ENCODE measurements at regions of chr4 and their contacts with region 1.

Region 1: GRCh38 chr4:139734875-139735380 is 69.3 kb downstream of the MGST2 start:
- DNase-seq: peak; percentile 75
- ATAC-seq: peak; percentile 96
- H3K4me3 ChIP-seq: peak overlapping the region; percentile 52
- H3K27ac ChIP-seq: peak overlapping the region; percentile 15
- H3K4me1 ChIP-seq: peaks cover 6% of the 10 kb centered on the region
- H3K27me3 ChIP-seq: no peaks in the 10 kb centered on the region
- CTCF ChIP-seq: peak; percentile 77
- POLR2A ChIP-seq: no peak
- RAD21 ChIP-seq: peak; percentile 85

Region 2: GRCh38 chr4:139441029-139441428 is 293.9 kb before region 1 on chr4:
- CTCF ChIA-PET with region 1: no interaction called
- POLR2A ChIA-PET with region 1: no interaction called
- dilution Hi-C with region 1: no loop called
- in situ Hi-C with region 1: no loop called
- intact Hi-C with region 1: no loop called
- DNase-seq: peak; percentile 3
- ATAC-seq: peak; percentile 44
- H3K4me3 ChIP-seq: no peak overlapping the region
- H3K27ac ChIP-seq: no peak overlapping the region
- H3K4me1 ChIP-seq: no peaks in the 10 kb centered on the region
- H3K27me3 ChIP-seq: no peaks in the 10 kb centered on the region
- CTCF ChIP-seq: no peak
- POLR2A ChIP-seq: no peak
- RAD21 ChIP-seq: no peak

Region 3: DNA sequence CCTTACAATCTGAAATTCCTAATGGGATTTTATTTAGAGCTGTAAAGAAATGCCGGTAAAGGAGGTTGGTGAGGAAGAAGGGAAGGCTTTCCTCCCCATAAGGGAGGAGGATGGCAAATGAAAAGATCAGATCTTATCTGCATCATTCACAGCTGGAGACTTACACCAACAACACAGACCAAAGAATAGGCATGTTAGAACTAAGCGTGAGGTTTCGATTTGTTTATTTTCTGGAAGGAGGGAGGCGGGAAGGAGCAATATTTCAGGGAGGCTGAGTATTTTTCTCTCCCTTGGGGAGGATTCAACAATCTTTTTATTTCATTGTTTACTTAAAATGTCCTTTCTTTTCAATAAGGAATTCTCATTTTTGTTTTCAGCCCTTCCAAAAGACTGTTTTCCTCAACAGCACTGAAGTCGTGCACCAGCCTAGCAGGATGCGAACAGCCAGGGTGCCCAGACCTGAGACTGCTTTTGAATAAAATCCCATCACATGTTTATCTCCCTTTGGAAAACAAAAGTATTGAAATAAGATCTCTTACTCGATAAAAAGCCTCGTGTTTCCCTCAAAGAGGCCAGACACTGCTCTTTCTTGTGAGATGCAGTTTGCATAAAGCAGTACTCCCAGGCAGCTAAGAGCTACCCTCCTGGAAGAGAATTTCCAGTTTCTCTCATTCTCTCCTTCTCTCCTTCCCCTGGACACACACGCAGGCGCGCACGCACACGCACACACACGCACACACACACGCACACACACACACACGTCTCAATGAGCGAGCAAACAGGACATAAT is 166.8 kb after region 1 on chr4:
- CTCF ChIA-PET with region 1: no interaction called
- POLR2A ChIA-PET with region 1: no interaction called
- dilution Hi-C with region 1: no loop called
- in situ Hi-C with region 1: no loop called
- intact Hi-C with region 1: loop called (anchors 5 kb)
- DNase-seq: peak; percentile 44
- ATAC-seq: peak; percentile 68
- H3K4me3 ChIP-seq: peak overlapping the region; percentile 38
- H3K27ac ChIP-seq: peak overlapping the region; percentile 26; the same call in 1 of the 2 replicates
- H3K4me1 ChIP-seq: peaks cover 4% of the 10 kb centered on the region
- H3K27me3 ChIP-seq: no peaks in the 10 kb centered on the region
- CTCF ChIP-seq: no peak
- POLR2A ChIP-seq: no peak
- RAD21 ChIP-seq: no peak

Region 4: DNA sequence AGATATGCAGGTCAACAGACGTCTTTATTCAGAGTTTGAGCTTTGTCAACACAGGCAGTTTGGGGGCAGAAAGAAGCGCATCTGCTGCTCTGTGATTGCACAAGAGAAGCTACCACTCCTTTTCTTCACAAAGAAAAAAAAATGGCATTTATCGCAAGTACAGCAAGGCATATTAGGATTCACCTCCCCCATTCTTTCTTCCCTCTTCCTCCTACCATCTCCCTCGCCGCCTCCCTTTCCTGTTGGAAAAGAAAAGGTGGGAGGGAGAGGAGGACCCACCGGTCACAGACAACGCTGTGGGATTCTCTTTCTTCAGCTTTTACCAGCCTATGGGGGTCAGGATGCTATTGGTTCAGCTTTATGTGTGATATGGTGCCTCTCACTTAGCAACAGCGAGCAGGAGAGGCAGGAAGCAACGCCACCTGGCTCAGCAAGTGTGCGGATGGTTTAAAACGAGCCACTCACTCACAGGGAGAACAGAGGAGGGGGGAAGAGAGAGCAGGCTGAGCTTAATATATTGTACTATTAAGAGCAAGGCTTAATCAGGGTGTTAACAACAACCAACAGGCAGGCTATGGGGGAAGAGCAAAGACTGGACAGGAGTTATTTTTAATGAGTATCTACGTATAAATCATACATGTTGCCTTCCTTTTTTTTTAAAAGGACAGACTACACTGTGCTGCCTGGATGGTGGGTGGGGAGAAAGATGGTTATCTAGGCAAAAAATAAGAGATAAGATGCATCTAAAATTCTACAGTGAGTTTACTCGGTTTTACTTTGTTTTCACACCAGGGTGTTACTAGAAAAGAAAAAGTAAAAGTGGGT is 314.3 kb after region 1 on chr4:
- CTCF ChIA-PET with region 1: no interaction called
- POLR2A ChIA-PET with region 1: no interaction called
- dilution Hi-C with region 1: no loop called
- in situ Hi-C with region 1: no loop called
- intact Hi-C with region 1: loop called (anchors 5 kb)
- DNase-seq: peak; percentile 57
- ATAC-seq: peak; percentile 55
- H3K4me3 ChIP-seq: peak overlapping the region; percentile 34
- H3K27ac ChIP-seq: peak overlapping the region; percentile 79
- H3K4me1 ChIP-seq: peaks cover 12% of the 10 kb centered on the region
- H3K27me3 ChIP-seq: no peaks in the 10 kb centered on the region
- CTCF ChIP-seq: no peak
- POLR2A ChIP-seq: no peak
- RAD21 ChIP-seq: no peak

Region 5: GRCh38 chr4:140308366-140309123 is 573.6 kb after region 1 on chr4:
- CTCF ChIA-PET with region 1: no interaction called
- POLR2A ChIA-PET with region 1: no interaction called
- dilution Hi-C with region 1: no loop called
- in situ Hi-C with region 1: no loop called
- intact Hi-C with region 1: loop called (anchors 1 kb)
- DNase-seq: peak; percentile 98
- ATAC-seq: peak; percentile 79
- H3K4me3 ChIP-seq: no peak overlapping the region
- H3K27ac ChIP-seq: peak overlapping the region; percentile 72
- H3K4me1 ChIP-seq: peaks cover 13% of the 10 kb centered on the region
- H3K27me3 ChIP-seq: no peaks in the 10 kb centered on the region
- CTCF ChIP-seq: no peak
- POLR2A ChIP-seq: peak; percentile 49; the same call in 1 of the 2 replicates
- RAD21 ChIP-seq: 0 out of 2 replicates have a peak, but pooled peaks have one; percentile 8

Region 6: DNA sequence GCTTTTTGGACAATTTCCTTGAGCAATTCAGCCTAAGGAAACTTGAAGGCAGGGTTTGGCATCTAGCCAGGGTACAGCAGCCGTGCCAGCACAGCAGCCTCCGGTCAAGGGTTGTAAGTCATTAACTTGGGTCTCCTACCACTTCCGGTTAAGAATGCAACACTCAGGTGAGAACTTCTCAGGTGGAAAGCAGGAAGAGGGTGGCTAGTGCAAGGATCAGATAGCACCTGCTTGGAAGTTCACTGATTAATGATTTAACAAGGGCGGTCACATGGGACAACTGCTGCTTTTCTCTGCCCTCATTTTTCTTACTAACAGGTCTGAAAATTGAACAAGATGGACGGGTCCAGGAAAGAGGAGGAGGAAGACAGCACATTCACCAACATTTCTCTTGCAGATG is 608.4 kb after region 1 on chr4:
- CTCF ChIA-PET with region 1: no interaction called
- POLR2A ChIA-PET with region 1: no interaction called
- dilution Hi-C with region 1: no loop called
- in situ Hi-C with region 1: no loop called
- intact Hi-C with region 1: no loop called
- DNase-seq: no peak
- ATAC-seq: no peak
- H3K4me3 ChIP-seq: no peak overlapping the region
- H3K27ac ChIP-seq: no peak overlapping the region
- H3K4me1 ChIP-seq: no peaks in the 10 kb centered on the region
- H3K27me3 ChIP-seq: peaks cover 26% of the 10 kb centered on the region
- CTCF ChIP-seq: no peak
- POLR2A ChIP-seq: no peak
- RAD21 ChIP-seq: no peak

Region 7: DNA sequence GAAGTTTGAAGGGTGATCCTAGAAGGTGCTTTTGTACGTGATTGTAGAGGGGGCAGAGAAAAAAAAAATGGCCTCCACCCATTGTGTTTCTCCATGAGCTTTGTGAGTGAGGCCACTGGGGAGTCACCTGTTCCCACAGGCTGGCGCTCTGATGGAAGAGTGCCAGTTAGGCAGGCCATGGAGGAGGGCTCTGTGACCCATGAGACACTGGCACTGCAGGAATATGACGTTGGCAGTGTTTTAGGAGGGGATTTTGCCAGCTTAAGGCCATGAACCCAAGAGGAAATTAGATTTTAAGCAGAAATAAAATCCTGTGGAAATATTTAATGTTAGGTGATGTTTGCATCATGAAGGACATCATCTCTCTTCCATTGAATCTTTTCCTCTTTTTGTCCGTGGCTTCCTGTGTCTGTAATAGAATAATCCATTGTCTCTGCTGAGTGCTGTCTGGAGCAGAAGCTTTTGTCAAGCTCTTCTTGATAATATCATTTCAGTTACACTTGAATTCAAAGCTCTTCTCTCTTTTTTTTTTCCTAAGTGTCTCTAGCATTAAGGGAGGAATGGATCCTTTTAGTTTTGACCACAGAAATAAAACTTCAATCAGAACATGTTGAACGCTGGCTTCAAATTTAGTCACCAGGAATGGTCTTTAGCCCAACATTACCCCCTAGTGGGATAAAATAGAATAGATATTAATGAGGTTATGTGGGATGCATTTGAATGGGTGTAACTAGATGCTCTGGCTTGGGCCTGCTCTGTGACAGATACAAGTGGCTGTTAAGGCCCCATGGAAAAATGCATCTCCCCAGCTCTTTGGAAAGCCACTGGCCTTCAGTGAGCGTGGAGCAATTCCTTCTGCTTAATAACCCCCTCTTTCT is 874.9 kb after region 1 on chr4:
- CTCF ChIA-PET with region 1: interaction called, 3 read pairs
- POLR2A ChIA-PET with region 1: no interaction called
- dilution Hi-C with region 1: no loop called
- in situ Hi-C with region 1: no loop called
- intact Hi-C with region 1: loop called (anchors 10 kb)
- DNase-seq: peak; percentile 55
- ATAC-seq: peak; percentile 92
- H3K4me3 ChIP-seq: no peak overlapping the region
- H3K27ac ChIP-seq: no peak overlapping the region
- H3K4me1 ChIP-seq: no peaks in the 10 kb centered on the region
- H3K27me3 ChIP-seq: peaks cover 7% of the 10 kb centered on the region
- CTCF ChIP-seq: peak; percentile 67
- POLR2A ChIP-seq: no peak
- RAD21 ChIP-seq: peak; percentile 71

Measured in IMR-90 (cell line).